Common myeloid progenitor, CD34-positive (primary cell): ENCODE measurements at regions of chr15 and their contacts with region 1.

Region 1: DNA sequence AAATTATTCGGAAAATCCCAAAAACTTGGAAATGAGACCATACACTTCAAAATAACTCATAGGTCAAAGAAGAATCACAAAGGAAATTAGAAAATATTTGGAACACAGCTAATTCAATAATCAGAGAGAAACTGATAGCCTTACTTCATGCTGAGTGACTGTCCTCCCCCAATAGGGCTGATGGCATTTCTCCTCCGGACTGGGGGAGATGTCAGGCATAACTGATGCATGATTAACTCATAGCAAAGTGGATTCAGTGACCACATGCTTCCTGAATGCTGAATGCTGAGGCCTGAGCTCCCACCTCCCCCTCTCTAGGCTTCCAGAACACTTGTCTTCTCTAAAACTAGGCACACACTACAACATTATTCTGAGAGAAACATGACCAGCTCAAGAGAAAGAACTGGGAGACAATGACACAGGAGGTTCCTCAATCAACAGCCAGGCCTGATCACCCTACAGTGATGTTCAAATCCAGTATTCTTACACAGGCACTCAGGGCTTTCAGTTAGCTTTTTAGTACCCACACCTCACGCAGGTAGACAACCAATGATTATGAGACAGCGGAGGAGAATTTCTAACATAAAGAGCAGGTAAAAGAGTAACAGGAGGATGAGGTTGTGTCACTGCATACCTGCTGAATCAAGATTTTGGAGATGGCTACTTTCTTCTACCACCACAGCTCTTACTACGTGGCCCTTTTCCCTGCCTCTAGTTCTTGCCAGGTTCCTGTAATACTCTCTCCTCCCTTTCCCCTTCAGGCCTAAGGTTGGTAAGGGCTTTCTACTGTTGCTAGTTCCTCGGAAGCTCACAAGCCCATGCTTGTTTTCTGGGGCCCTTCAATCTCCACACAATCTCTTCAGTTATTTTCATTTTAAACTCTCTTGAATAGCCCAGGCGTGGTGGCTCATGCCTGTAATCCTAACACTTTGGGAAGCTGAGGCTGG is 96.1 kb downstream of the FMN1 start:
- DNase-seq: peak in 2 of 3 donors; percentile 7 to 11
- H3K4me3 ChIP-seq: no peak overlapping the region
- H3K27ac ChIP-seq: no peak overlapping the region
- H3K4me1 ChIP-seq: peaks cover 0 to 23% (median 5%) of the 10 kb centered on the region in 4 experiments
- H3K27me3 ChIP-seq: peaks cover 0 to 2% (median 0%) of the 10 kb centered on the region in 5 experiments

Region 2: GRCh38 chr15:33086507-33087121 is 11.8 kb before region 1 on chr15:
- CTCF ChIA-PET with region 1: interaction called, 10 read pairs
- POLR2A ChIA-PET with region 1: no interaction called
- DNase-seq: peak; percentile 64 to 83 (median 80)
- H3K4me3 ChIP-seq: no peak overlapping the region
- H3K27ac ChIP-seq: no peak overlapping the region
- H3K4me1 ChIP-seq: no peaks in the 10 kb centered on the region
- H3K27me3 ChIP-seq: peaks cover 0 to 3% (median 0%) of the 10 kb centered on the region in 5 experiments

Region 3: DNA sequence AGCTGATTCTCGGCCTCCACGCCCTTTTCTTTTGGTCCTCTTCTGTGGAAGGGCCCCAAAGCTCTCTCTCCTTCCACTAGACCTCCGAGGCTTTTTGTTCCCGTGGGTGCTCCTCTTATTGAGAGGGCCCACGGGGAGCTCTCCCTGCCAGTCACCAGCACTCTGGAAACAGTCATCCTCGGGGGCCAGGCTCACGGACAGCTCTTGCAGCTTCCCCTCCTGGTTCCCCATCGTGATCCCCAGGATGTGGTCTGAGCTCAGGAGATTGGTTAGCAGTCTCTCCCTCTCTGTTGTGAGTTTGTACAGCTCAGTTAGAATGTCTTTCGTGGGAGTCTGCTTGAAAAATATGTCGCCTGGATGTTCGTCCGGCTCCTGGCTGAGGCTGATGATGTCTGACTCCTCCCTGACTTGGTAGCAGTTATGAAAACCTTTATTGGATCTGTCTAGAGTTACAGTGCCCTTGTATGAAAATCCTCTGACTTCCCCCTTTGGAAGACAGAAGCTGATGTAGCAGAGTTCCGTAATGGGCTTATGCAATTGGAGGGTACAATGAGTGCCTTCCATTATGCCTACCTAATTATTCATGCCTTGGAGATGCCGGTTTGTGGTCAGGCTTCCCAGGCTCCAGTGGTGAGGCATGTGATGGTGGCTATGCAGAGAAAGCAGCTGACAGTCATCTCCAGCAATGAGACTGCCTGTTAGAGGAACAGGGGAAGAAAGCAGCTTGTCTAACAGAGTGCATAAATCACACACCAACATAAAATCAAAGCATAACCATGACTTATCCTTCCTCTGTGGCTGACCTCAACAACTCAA is 56.2 kb after region 1 on chr15:
- CTCF ChIA-PET with region 1: no interaction called
- POLR2A ChIA-PET with region 1: no interaction called
- DNase-seq: peak; percentile 46 to 87 (median 83)
- H3K4me3 ChIP-seq: peak overlapping the region in 1 of 7 experiments; percentile 32
- H3K27ac ChIP-seq: no peak overlapping the region
- H3K4me1 ChIP-seq: peaks cover 11 to 45% (median 21%) of the 10 kb centered on the region in 4 experiments
- H3K27me3 ChIP-seq: peaks cover 0 to 41% (median 6%) of the 10 kb centered on the region in 5 experiments